ENCODE measurements at regions of chr7 and their contacts with region 1.

Region 1: DNA sequence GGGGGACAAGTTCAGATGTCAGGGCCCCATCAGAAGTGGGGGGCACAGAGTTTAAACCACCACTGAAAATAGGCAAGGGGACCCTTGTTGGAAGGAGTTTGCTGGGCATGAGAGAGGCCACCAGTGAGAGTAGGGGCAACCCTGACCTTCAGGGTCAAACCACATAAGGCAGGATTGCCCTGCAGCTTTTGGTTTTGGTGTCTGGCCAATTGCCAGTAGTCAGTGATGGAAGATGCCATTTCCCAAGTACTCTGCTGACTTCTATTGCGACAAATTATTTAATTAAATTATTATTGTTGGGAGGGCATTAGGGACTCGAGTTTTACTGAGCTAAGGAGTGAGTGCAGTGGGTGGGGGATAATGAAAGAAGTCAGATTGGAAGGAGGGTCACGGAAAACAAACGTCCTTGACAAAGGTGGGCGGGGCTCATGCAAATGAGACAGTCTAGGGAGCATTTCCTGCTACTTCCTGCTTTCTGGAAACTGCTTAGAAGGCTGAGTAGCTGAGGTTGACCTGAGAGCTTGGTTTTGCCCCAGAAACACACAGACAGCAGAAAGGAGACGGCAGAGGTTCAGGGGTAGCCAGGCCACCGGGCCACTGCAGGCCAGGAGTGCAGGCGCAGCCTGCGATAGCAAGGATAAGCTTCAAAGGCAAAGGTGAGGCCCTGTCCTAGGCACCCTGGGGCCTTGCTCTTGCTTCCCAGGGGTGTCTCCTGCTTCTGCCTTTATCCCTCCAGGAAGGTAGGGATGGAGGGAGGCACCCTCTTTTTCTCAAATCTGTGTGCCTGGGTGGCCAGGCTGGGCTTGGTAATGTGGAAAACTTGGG is 74.1 kb upstream of the ANLN start:
- DNase-seq: no peak
- H3K4me3 ChIP-seq: no peak overlapping the region
- H3K27ac ChIP-seq: no peak overlapping the region
- H3K27me3 ChIP-seq: peaks cover 7% of the 10 kb centered on the region
- CTCF ChIP-seq: no peak

Region 2: DNA sequence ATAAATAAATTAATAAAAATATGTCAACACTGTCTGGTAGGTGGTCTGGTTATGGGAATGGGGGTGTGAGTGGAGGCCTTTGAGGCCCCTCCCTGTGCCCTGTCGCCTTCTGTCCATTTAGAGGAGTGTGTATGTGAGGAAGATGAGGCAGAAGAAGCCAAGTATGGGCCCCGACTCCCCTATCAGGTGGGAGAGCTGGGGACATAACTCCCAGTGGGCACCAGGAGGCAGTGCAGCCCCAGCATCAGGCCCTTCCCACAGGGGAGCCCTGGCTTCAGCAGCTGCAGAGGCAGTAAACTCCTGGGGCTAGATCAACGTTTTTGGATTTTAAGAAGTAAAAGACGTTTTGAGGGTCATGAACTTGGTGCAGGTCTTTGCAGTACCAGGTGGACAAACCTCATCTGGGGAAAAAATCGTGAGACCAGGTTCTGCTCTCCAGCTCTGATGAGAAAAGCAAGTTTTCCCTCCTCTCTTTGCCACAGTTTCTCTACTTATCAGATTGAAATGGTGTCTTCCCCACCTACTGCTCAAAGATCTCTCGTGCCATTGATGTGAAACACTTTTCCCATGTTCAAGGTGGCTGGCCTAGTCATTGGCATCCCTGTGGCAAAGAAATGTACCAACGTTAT is 330.3 kb before region 1 on chr7:
- CTCF ChIA-PET with region 1: interaction called, 72 read pairs
- POLR2A ChIA-PET with region 1: no interaction called
- DNase-seq: peak; percentile 39
- H3K4me3 ChIP-seq: no peak overlapping the region
- H3K27ac ChIP-seq: no peak overlapping the region
- H3K27me3 ChIP-seq: peaks cover 4% of the 10 kb centered on the region
- CTCF ChIP-seq: peak; percentile 98

Region 3: DNA sequence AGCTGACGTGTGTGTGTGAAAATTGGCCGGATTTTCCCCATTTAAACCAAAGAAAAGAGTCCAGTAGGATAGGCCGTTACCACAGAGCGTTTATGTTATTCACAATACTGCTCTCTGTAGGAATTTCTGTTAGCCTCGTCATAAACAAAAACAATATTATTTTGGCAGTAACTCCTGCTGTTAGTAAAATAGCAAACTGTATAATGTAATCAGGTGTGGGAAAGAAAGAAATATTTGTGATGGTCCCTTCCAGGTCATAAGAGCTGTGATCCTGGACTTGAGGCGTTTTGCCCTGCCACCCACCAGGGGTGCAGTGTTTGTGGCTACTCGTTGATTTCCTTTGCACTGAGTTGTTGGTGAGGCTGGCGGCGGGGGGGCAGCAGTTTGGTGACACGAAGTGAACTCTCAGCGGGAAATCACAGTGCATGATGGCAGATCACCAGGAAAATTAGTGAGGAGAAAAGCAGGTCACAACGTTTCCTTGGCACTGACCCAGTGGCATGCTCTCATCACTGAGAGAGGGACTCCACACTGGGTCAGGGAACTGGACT is 159.6 kb before region 1 on chr7:
- CTCF ChIA-PET with region 1: interaction called, 13 read pairs
- POLR2A ChIA-PET with region 1: no interaction called
- DNase-seq: no peak
- H3K4me3 ChIP-seq: peak overlapping the region; percentile 85
- H3K27ac ChIP-seq: no peak overlapping the region
- H3K27me3 ChIP-seq: no peaks in the 10 kb centered on the region
- CTCF ChIP-seq: peak; percentile 27; the same call in 1 of the 2 replicates

Region 4: GRCh38 chr7:36175886-36176285 is 139.6 kb before region 1 on chr7:
- CTCF ChIA-PET with region 1: no interaction called
- POLR2A ChIA-PET with region 1: no interaction called
- DNase-seq: no peak
- H3K4me3 ChIP-seq: no peak overlapping the region
- H3K27ac ChIP-seq: peak overlapping the region; percentile 21
- H3K27me3 ChIP-seq: no peaks in the 10 kb centered on the region
- CTCF ChIP-seq: no peak

Region 5: GRCh38 chr7:36303202-36304098 is 12.1 kb before region 1 on chr7:
- CTCF ChIA-PET with region 1: interaction called, 33 read pairs
- POLR2A ChIA-PET with region 1: no interaction called
- DNase-seq: peak; percentile 66
- H3K4me3 ChIP-seq: no peak overlapping the region
- H3K27ac ChIP-seq: peak overlapping the region; percentile 68
- H3K27me3 ChIP-seq: no peaks in the 10 kb centered on the region
- CTCF ChIP-seq: no peak